Breast epithelium (tissue), 4 donors: ENCODE measurements at regions of chr3 and their contacts with region 1.

Region 1: GRCh38 chr3:25652921-25653320 is 11.8 kb downstream of the TOP2B start:
- DNase-seq: no peak
- H3K4me3 ChIP-seq: no peak overlapping the region
- H3K27ac ChIP-seq: no peak overlapping the region
- H3K4me1 ChIP-seq: peaks cover 0 to 6% of the 10 kb centered on the region in 2 donors
- H3K27me3 ChIP-seq: no peaks in the 10 kb centered on the region
- CTCF ChIP-seq: no peak
- POLR2A ChIP-seq: no peak

Region 2: GRCh38 chr3:25692341-25692740 is 39.4 kb after region 1 on chr3:
- intact Hi-C with region 1: loop called (anchors 2 kb)
- DNase-seq: no peak
- H3K4me3 ChIP-seq: no peak overlapping the region
- H3K27ac ChIP-seq: no peak overlapping the region
- H3K4me1 ChIP-seq: no peaks in the 10 kb centered on the region
- H3K27me3 ChIP-seq: no peaks in the 10 kb centered on the region
- CTCF ChIP-seq: no peak
- POLR2A ChIP-seq: no peak